ENCODE measurements at regions of chr7 and their contacts with region 1.

Region 1: DNA sequence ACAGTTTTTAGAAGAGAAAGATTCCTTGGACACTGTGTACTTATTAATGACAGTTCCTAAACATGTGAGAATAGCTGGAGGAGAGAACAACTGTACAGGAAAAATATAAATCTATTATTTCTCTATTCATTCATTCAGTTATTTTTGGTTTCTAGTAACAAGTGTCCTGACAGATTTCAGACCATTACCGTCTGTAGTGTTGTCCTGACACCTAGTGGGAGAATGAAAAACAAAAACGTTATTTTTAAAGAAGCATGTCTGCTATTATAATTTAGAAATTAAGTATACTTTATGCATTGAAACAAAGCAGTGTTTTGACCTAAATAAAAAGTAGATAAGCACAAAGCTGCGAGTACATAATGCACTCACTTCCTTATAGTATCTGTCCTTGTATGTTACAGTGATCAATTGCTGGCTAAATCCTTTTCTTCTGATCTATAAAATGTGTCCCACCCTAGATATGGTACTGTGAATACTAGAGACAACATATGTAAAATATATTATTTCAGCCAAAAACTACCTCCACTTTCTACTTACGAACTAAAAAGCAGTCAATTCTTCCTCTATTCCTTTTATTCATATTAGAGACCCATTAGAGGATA is 575.6 kb downstream of the ARL4A start:
- DNase-seq: no peak
- H3K4me3 ChIP-seq: no peak overlapping the region
- H3K27ac ChIP-seq: no peak overlapping the region
- H3K4me1 ChIP-seq: no peaks in the 10 kb centered on the region
- H3K27me3 ChIP-seq: no peaks in the 10 kb centered on the region
- CTCF ChIP-seq: peak in 2 of 3 experiments; percentile 14 to 39; a peak in 2 of 4 replicates
- EP300 ChIP-seq: no peak
- POLR2A ChIP-seq: no peak
- RAD21 ChIP-seq: peak; percentile 74 to 84

Region 2: DNA sequence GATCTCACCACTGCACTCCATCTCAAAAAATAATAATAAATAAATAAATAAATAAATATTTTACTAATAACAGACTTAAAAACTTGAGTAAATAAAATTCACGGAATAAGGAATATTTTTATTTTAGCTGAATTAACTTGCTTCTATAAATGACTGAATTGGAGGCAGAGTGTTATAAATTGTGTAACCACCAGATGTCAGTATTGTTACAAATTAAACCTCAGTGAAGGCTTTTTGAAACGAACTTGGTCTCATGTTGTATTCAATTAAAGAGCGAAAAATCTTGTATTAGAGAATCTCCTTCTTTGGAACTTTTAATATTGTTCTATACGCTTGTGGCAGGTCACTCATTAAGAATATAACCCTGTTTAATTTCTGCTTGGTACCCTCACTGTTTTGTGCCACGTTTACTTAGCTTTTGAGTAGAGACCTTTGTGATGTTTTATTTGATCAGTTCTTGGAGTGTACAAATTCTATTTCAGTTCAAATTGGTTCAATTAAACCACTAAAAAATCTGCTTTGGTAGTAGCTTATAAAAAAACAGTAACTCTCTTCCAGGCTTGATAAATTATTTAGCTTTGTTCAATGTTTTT is 738.1 kb before region 1 on chr7:
- CTCF ChIA-PET with region 1: interaction called, 21 read pairs
- POLR2A ChIA-PET with region 1: no interaction called
- DNase-seq: no peak
- H3K4me3 ChIP-seq: no peak overlapping the region
- H3K27ac ChIP-seq: no peak overlapping the region
- H3K4me1 ChIP-seq: no peaks in the 10 kb centered on the region
- H3K27me3 ChIP-seq: no peaks in the 10 kb centered on the region
- CTCF ChIP-seq: peak in 2 of 3 experiments; percentile 31 to 44; a peak in 2 of 4 replicates
- EP300 ChIP-seq: no peak
- POLR2A ChIP-seq: no peak
- RAD21 ChIP-seq: peak; percentile 67 to 81

Region 3: DNA sequence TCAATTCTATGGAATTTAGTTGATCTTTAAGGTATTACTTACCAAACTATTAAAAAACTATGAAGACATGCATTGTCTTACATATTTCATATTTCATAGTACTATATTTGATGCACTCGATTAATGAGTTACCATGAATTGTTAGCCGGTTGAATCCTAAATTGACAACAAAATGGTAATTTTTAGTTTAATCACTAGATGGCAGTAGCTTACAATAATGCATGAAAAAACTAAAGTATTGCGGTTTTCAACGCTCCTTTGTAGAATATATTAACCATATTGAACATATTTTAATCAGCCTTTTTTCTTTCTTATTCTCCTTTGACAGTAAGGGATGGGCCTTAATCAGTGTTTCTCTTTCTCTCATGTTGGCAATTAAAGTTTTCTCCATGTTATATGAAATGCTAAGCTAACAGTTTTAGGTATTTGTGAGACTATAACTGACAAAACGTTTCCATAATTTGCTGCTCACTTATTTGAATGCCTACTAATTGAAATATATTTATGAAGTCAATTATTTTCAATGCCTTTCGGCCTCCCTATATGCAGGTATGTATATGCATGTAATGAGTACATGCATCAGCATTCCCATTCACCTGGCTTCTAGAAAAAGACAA is 624.1 kb before region 1 on chr7:
- CTCF ChIA-PET with region 1: interaction called, 13 read pairs
- POLR2A ChIA-PET with region 1: no interaction called
- DNase-seq: no peak
- H3K4me3 ChIP-seq: no peak overlapping the region
- H3K27ac ChIP-seq: no peak overlapping the region
- H3K4me1 ChIP-seq: no peaks in the 10 kb centered on the region
- H3K27me3 ChIP-seq: no peaks in the 10 kb centered on the region
- CTCF ChIP-seq: peak in 1 of 3 experiments; percentile 39; a peak in 2 of 4 replicates
- EP300 ChIP-seq: no peak
- POLR2A ChIP-seq: no peak
- RAD21 ChIP-seq: peak; percentile 62 to 73

Region 4: DNA sequence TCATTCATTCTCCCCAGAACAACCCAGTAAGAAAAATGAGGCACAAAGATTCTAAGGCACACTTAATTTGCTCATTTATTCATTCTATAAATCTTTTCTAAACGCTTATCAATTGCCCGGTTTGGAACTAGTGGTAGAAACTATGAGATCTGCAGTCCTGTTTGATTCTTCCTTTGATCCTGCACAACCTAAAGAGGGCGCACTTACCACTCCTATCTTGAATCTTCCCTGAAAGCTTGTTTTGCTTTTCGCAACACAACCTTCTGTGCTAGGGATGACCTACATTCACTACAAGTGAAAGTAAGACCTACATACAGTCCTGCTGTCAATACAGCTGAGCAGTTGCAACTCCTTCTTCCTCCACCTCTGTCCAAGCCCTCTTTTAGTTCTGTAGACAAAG is 588.2 kb before region 1 on chr7:
- CTCF ChIA-PET with region 1: interaction called, 19 read pairs
- POLR2A ChIA-PET with region 1: no interaction called
- DNase-seq: peak in 1 of 2 experiments; percentile 53
- H3K4me3 ChIP-seq: no peak overlapping the region
- H3K27ac ChIP-seq: no peak overlapping the region
- H3K4me1 ChIP-seq: no peaks in the 10 kb centered on the region
- H3K27me3 ChIP-seq: no peaks in the 10 kb centered on the region
- CTCF ChIP-seq: peak in 2 of 3 experiments; percentile 59 to 73; a peak in 3 of 4 replicates
- EP300 ChIP-seq: no peak
- POLR2A ChIP-seq: no peak
- RAD21 ChIP-seq: peak; percentile 79 to 85